Transverse colon (tissue), 4 donors: ENCODE measurements at regions of chr22 and their contacts with region 1.

Region 1: DNA sequence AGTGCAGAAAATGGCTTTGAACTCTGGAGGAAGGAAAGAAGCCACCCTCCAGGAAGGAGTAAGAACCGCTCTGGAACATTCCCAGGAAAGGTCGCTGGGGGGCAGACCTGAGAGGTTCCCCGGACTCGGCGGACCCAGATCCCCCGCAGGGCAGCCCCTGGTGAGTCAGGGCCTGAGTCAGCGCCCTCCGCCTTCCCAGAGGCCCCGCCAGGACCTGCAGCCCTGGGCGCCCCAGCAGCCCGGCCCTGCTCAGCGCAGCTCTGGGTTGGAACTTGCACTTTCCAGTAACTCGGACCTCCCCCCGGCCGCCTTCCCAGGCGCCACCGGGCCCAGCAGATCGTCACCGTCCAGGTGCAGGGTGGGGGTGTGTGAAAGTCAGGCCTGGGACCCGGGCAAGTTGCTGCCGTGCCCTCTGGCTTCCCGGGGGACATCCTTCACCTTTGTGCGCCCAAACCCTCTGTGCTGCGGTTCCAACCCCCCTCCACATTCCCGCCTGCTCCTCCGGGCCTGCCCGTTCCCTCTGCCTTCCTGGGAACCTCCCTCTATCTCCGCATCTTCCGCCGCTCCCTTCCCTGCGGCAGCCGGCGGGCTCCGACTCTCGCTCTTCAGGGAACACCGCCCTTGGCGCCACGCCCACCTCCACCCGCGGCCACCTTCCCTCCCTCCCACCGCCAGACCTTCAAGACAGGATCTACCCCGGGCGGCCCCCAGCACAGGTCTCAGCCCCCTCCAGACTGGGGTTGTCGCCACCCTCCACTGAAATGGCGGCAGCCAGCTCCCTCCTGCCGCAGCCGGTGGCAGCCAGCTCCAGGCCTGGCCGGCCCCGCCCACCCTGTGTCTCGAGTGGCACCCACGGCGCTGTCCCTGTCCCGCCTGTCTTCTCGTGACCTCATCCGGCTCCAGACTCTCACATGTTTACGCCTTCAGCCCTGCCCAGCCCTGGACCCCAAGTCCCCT is 36.8 kb upstream of the WNT7B start:
- DNase-seq: peak; percentile 96
- H3K4me3 ChIP-seq: peak overlapping the region; percentile 25 to 61 (median 52)
- H3K27ac ChIP-seq: peak overlapping the region; percentile 93 to 97 (median 94)
- H3K4me1 ChIP-seq: peaks cover 9 to 19% (median 15%) of the 10 kb centered on the region in 4 donors
- H3K27me3 ChIP-seq: no peaks in the 10 kb centered on the region
- CTCF ChIP-seq: peak; percentile 67 to 93 (median 76)
- EP300 ChIP-seq: no peak
- POLR2A ChIP-seq: peak; percentile 86

Region 2: GRCh38 chr22:45977003-45977411 is 36.7 kb before region 1 on chr22 and contains the start of gene WNT7B:
- in situ Hi-C with region 1: no loop called
- intact Hi-C with region 1: no loop called
- DNase-seq: no peak
- H3K4me3 ChIP-seq: peak within 1 kb of the TSS in 3 of 4 donors; percentile 3 to 35 (median 10)
- H3K27ac ChIP-seq: no peak within 1 kb of the TSS
- H3K4me1 ChIP-seq: peaks cover 3 to 30% (median 25%) of the 10 kb centered on the region in 4 donors
- H3K27me3 ChIP-seq: peaks cover 66% of the 10 kb centered on the region
- CTCF ChIP-seq: no peak
- EP300 ChIP-seq: no peak
- POLR2A ChIP-seq: no peak
- total RNA-seq, gene WNT7B: not detected

Region 3: DNA sequence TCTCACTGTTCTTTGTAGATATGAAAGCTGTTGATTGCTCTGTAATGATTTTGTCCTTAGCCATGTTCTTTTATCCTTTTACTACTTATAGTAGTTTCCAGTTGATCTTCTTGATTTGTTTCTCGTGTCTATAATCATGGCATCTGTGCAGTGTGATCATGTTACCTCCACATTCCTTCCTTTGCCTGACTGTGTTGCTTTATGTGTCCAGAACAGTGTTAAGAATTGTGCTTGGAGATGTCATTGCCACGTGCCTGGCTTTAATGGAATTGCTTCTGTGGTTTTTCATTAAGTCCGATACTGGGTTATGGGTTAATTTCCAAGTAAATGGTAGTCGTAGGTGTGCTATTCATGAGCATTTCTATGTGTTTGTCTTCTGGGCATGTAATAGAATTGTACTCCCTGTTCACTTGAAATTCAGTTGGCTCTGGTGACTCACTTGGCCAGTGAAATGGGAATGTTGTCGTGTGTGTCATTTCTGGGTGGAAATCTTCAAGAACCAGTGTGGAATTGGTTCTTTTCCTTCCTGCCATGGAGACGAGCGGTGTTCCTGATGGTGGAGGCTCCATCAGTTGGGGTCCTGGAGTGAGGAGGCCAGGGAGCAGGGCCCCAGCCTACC is 289.7 kb after region 1 on chr22:
- in situ Hi-C with region 1: loop called in 1 of 4 experiments (anchors 25 kb)
- intact Hi-C with region 1: no loop called
- DNase-seq: no peak
- H3K4me3 ChIP-seq: no peak overlapping the region
- H3K27ac ChIP-seq: no peak overlapping the region
- H3K4me1 ChIP-seq: no peaks in the 10 kb centered on the region
- H3K27me3 ChIP-seq: no peaks in the 10 kb centered on the region
- CTCF ChIP-seq: no peak
- EP300 ChIP-seq: no peak
- POLR2A ChIP-seq: no peak